Motor neuron (in vitro differentiated cells): ENCODE measurements at regions of chr1 and their contacts with region 1.

Region 1: DNA sequence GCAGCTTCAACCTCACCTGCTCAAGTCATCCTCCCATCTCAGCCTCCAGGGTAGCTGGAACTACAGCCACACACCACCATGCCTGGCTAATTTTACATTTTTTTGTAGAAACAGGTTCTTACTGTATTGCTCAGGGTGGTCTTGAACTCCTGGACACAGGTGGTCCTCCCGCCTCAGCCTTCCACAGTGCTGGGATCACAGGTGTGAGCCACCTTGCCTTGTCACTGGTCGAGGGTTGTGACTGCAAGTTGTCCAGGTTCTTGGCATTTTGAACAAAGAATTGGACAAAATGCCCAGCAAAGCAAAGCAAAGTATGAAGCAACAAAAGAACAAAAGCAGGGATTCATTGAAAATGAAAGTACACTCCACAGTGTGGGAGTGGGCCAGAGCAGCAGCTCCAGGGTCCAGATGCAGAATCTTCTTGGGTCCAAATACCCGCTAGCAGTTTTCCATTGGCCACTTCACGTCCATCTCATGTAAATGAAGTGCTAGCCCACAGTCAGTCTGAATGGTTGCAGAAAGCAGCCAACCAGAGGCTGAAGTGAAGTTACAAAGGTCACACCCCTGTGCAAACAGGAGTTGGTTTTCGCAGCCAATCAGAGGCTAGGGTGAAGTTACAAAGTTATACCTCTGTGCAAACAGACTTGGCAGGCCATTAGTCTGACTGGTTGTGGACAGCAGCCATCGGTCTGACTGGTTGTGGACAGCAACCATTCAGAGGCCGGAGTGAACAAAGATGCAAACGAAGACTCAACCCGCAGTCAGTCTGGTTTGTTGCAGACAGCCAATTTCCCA is 109.5 kb upstream of the KIF26B start:
- ATAC-seq: peak in 5 of 8 experiments; percentile 31 to 81 (median 44)
- H3K4me3 ChIP-seq: no peak overlapping the region
- H3K27ac ChIP-seq: no peak overlapping the region
- H3K4me1 ChIP-seq: peaks cover 6 to 12% of the 10 kb centered on the region in 2 donors

Region 2: GRCh38 chr1:244599937-244600350 is 445.3 kb before region 1 on chr1:
- in situ Hi-C with region 1: loop called in 3 of 9 experiments (anchors 10 to 25 kb)
- ATAC-seq: peak; percentile 34 to 90 (median 76)
- H3K4me3 ChIP-seq: no peak overlapping the region
- H3K27ac ChIP-seq: no peak overlapping the region
- H3K4me1 ChIP-seq: peaks cover 0 to 1% of the 10 kb centered on the region in 2 donors

Region 3: GRCh38 chr1:244647819-244648218 is 397.5 kb before region 1 on chr1:
- in situ Hi-C with region 1: no loop called
- ATAC-seq: no peak
- H3K4me3 ChIP-seq: no peak overlapping the region
- H3K27ac ChIP-seq: no peak overlapping the region
- H3K4me1 ChIP-seq: peaks cover 3 to 4% of the 10 kb centered on the region in 2 donors

Region 4: GRCh38 chr1:244864253-244865027 is 180.8 kb before region 1 on chr1 and contains the start of gene HNRNPU:
- in situ Hi-C with region 1: loop called in 2 of 9 experiments (anchors 25 kb)
- ATAC-seq: peak; percentile 64 to 74 (median 68)
- H3K4me3 ChIP-seq: peak within 1 kb of the TSS; percentile 61 to 94 (median 86)
- H3K27ac ChIP-seq: peak within 1 kb of the TSS; percentile 96 to 97
- H3K4me1 ChIP-seq: peaks cover 18 to 39% of the 10 kb centered on the region in 2 donors
- total RNA-seq, gene HNRNPU: 243 to 657 (median 314) TPM

Region 5: GRCh38 chr1:244896550-244896949 is 148.7 kb before region 1 on chr1:
- in situ Hi-C with region 1: loop called in 1 of 9 experiments (anchors 25 kb)
- ATAC-seq: no peak
- H3K4me3 ChIP-seq: no peak overlapping the region
- H3K27ac ChIP-seq: no peak overlapping the region
- H3K4me1 ChIP-seq: no peaks in the 10 kb centered on the region

Region 6: GRCh38 chr1:245225322-245226202 is 180.3 kb after region 1 on chr1:
- in situ Hi-C with region 1: no loop called
- ATAC-seq: peak in 5 of 8 experiments; percentile 69 to 98 (median 94)
- H3K4me3 ChIP-seq: no peak overlapping the region
- H3K27ac ChIP-seq: no peak overlapping the region
- H3K4me1 ChIP-seq: peaks cover 14 to 18% of the 10 kb centered on the region in 2 donors